A549 (cell line): ENCODE measurements at regions of chr1 and their contacts with region 1.

Region 1: DNA sequence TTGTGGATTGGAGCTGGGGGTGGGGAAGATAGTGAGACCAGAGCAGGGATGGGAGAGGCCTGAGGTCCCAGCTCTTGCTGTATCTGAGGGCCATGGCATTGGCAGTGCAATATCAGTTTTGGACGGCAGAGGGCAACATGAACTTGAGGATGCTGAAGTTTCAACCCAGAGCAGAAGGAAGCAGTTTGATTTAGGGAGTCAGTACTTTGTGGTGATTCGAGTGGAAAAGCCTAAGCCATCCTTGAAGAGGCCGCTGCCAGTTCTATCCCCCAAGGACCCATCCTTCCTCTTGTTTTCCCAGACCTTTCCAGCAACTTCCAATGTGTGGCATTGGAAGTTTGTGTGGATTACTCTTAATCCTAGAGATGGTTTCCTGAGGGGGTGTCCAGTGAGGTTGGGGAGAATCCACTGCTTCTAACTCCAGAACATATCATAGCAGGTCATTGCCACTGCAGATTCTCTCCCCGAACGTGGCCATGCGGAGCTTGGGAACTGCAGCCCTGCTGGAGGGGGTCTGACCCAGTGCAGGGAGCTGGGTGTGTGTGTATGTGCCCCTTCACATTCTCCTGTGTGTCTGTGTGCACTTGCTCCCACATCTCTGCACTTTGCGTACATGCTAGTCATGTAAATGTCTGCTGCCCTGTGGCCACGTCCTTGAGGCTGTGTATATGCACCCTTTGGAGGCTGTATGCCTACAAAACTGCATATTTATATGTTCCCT is 24.1 kb downstream of the SLC26A9 start:
- DNase-seq: peak; percentile 85 to 86
- ATAC-seq: peak; percentile 94 to 96
- H3K4me3 ChIP-seq: no peak overlapping the region
- H3K27ac ChIP-seq: peak overlapping the region; percentile 48 to 71; a peak in 4 of 6 replicates
- H3K4me1 ChIP-seq: peaks cover 8% of the 10 kb centered on the region
- CTCF ChIP-seq: peak; percentile 93
- EP300 ChIP-seq: no peak
- POLR2A ChIP-seq: no peak
- RAD21 ChIP-seq: peak; percentile 98 to 99

Region 2: DNA sequence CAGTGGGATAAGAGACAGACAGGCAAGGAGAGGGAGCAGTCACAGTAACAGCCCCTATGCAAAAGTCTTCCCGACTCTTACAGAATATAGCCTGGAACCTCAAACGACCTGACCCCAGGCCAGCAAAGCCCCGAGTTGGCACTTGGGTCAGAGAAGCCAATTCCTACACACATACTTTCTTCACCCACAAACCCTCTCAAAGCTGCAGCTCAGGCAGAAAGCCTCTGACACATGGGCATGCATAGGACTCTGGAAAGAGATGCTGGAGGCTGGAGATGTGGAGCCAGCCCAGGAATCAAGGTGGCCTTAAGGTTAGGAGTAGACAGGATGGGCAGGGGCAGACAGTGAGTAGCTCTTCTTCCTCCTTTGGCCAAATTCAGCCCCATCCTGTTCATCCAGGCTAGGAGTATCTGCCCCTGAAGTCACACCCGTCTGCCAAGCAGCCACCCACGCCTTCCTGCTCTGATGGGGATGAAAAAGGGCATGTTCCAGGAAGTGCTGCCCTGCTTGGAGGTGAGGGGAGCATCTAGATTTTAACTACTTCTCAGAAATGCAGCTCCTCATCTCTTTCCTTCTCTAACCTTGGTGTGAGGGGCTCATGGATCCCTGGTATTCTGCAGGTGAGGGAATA is 114.0 kb before region 1 on chr1:
- CTCF ChIA-PET with region 1: interaction called, 12 read pairs
- POLR2A ChIA-PET with region 1: no interaction called
- DNase-seq: no peak
- ATAC-seq: no peak; a peak in 1 of 6 replicates
- H3K4me3 ChIP-seq: no peak overlapping the region
- H3K27ac ChIP-seq: no peak overlapping the region
- H3K4me1 ChIP-seq: no peaks in the 10 kb centered on the region
- CTCF ChIP-seq: no peak
- EP300 ChIP-seq: no peak
- POLR2A ChIP-seq: no peak
- RAD21 ChIP-seq: no peak

Region 3: DNA sequence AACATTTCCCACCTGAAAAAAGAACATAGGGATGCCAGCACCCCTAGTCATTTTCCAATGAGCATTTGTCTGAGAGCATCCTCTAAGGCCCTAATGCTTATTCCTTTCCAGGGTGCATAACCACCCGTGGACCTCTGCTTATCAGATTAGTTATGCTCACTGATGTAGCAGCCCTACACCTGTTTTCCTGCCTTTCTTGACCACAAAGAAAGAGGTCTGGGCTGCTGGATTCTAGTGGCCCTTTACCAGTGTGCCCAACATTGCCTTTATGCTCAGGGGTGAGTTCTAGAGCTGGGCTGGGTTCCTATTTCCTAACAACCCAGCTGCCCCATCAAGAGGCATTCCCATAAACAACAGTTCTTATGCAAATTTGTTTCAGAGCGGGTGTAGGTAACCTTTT is 49.0 kb before region 1 on chr1:
- CTCF ChIA-PET with region 1: no interaction called
- POLR2A ChIA-PET with region 1: no interaction called
- DNase-seq: no peak
- ATAC-seq: no peak
- H3K4me3 ChIP-seq: no peak overlapping the region
- H3K27ac ChIP-seq: no peak overlapping the region
- H3K4me1 ChIP-seq: no peaks in the 10 kb centered on the region
- CTCF ChIP-seq: no peak
- EP300 ChIP-seq: no peak
- POLR2A ChIP-seq: no peak
- RAD21 ChIP-seq: no peak

Region 4: GRCh38 chr1:205907794-205908193 is 11.4 kb before region 1 on chr1:
- CTCF ChIA-PET with region 1: interaction called, 18 read pairs
- POLR2A ChIA-PET with region 1: no interaction called
- DNase-seq: peak in 1 of 2 experiments; percentile 52
- ATAC-seq: peak; percentile 90 to 92; a peak in 5 of 6 replicates
- H3K4me3 ChIP-seq: no peak overlapping the region
- H3K27ac ChIP-seq: peak overlapping the region; percentile 26 to 57; a peak in 2 of 6 replicates
- H3K4me1 ChIP-seq: peaks cover 7% of the 10 kb centered on the region; the same call in 2 of the 3 replicates
- CTCF ChIP-seq: peak; percentile 68
- EP300 ChIP-seq: no peak
- POLR2A ChIP-seq: no peak
- RAD21 ChIP-seq: peak; percentile 63 to 77

Region 5: DNA sequence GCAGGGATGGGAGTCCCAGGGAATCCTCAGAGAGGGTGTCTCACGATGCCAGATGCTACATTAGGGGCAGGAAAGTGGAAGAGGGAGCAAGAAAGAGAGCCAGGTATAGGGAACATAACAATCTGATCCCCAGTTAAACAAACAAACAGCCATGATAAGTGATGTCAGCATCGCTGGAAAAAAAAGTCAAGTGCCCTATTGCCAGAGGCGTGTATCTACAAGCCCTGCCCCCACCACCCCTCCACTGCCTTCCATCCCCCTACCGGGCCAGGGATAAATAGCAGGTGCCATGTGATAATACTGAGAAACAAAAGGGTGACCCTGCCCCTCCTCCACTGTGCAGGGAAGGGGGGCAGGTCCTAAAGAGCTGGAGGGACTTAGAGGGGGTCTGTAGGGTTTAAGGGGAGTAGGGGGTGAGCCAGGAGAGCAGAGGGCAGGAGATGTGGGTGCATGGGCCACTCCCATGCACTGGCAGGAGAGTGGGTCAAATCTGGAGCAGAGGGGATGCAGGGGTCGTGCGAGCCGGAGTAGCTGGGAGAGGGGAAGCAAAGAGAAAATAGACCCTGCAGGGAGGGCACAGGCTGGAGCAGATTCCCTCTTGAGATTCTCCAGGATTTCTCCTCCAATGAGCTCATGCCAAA is 20.6 kb after region 1 on chr1:
- CTCF ChIA-PET with region 1: interaction called, 49 read pairs
- POLR2A ChIA-PET with region 1: no interaction called
- DNase-seq: peak; percentile 58 to 82
- ATAC-seq: peak; percentile 46 to 69; a peak in 5 of 6 replicates
- H3K4me3 ChIP-seq: no peak overlapping the region
- H3K27ac ChIP-seq: peak overlapping the region; percentile 68 to 93
- H3K4me1 ChIP-seq: peaks cover 59% of the 10 kb centered on the region
- CTCF ChIP-seq: no peak
- EP300 ChIP-seq: no peak
- POLR2A ChIP-seq: no peak
- RAD21 ChIP-seq: no peak

Region 6: DNA sequence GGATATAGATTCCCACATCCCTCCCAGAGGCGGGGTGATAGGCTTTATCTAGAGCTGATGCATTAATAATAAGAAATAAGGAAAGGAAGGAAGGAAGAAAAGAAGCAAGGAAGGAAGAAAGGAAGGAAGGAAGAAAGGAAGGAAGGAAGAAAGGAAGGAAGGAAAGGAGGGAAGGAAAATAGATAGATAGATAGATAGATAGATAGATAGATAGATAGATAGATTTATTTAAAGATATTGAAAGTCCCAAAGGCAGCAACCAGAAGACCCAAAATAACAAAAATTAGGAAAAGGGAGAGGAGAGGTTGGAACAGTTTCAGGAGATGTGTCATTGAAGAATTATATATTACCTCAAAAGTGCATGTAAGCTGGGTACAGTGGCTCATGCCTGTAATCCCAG is 36.3 kb after region 1 on chr1:
- CTCF ChIA-PET with region 1: interaction called, 52 read pairs
- POLR2A ChIA-PET with region 1: no interaction called
- DNase-seq: no peak
- ATAC-seq: no peak
- H3K4me3 ChIP-seq: no peak overlapping the region
- H3K27ac ChIP-seq: no peak overlapping the region
- H3K4me1 ChIP-seq: no peaks in the 10 kb centered on the region
- CTCF ChIP-seq: no peak
- EP300 ChIP-seq: no peak
- POLR2A ChIP-seq: no peak
- RAD21 ChIP-seq: no peak

Region 7: DNA sequence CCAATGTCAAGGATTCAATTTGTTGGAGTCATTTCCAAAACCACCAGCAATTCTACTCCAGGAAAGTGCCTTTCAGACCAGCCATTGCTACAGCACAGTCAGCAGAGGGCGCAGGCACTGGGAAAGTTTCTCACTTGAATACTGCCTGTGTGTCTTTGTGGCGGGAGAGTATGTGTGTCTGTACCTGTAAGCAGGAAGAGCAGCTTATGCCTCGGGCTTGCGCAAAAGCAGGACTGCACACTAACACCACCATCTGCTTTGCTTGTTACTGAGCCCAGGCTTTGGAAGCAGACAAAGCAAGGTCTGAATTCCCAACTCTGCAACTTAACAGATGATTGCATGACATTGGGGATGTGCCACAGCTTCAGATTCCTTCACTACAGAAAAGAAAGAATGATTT is 111.5 kb after region 1 on chr1:
- CTCF ChIA-PET with region 1: interaction called, 22 read pairs
- POLR2A ChIA-PET with region 1: no interaction called
- DNase-seq: peak; percentile 58 to 83
- ATAC-seq: peak; percentile 96 to 99
- H3K4me3 ChIP-seq: no peak overlapping the region
- H3K27ac ChIP-seq: no peak overlapping the region
- H3K4me1 ChIP-seq: peaks cover 3% of the 10 kb centered on the region; the same call in 1 of the 3 replicates
- CTCF ChIP-seq: peak; percentile 85
- EP300 ChIP-seq: no peak
- POLR2A ChIP-seq: no peak
- RAD21 ChIP-seq: peak; percentile 70 to 71

Region 8: GRCh38 chr1:206041640-206042039 is 122.5 kb after region 1 on chr1:
- CTCF ChIA-PET with region 1: no interaction called
- POLR2A ChIA-PET with region 1: no interaction called
- DNase-seq: no peak
- ATAC-seq: peak; percentile 13 to 26; a peak in 2 of 6 replicates
- H3K4me3 ChIP-seq: no peak overlapping the region
- H3K27ac ChIP-seq: no peak overlapping the region
- H3K4me1 ChIP-seq: no peaks in the 10 kb centered on the region
- CTCF ChIP-seq: no peak
- EP300 ChIP-seq: no peak
- POLR2A ChIP-seq: no peak
- RAD21 ChIP-seq: no peak